RWPE1 (cell line): ENCODE measurements at regions of chr15 and their contacts with region 1.

Region 1: GRCh38 chr15:63600616-63601025 is 3.4 kb downstream of the FBXL22 start:
- DNase-seq: peak; percentile 87
- H3K27ac ChIP-seq: peak overlapping the region; percentile 83
- CTCF ChIP-seq: peak; percentile 39; the same call in 1 of the 2 replicates

Region 2: GRCh38 chr15:63466378-63467192 is 134.0 kb before region 1 on chr15:
- CTCF ChIA-PET with region 1: interaction called, 21 read pairs
- POLR2A ChIA-PET with region 1: no interaction called
- DNase-seq: peak; percentile 83
- H3K27ac ChIP-seq: no peak overlapping the region
- CTCF ChIP-seq: peak; percentile 85

Region 3: GRCh38 chr15:63818191-63818590 is 217.6 kb after region 1 on chr15:
- CTCF ChIA-PET with region 1: no interaction called
- POLR2A ChIA-PET with region 1: no interaction called
- DNase-seq: no peak
- H3K27ac ChIP-seq: no peak overlapping the region
- CTCF ChIP-seq: no peak